ENCODE measurements at regions of chr17 and their contacts with region 1.

Region 1: GRCh38 chr17:61412143-61412859 is 12.7 kb downstream of the TBX2 start:
- DNase-seq: peak; percentile 77 to 93 (median 86)
- ATAC-seq: peak; percentile 14 to 80 (median 76)
- H3K4me3 ChIP-seq: peak overlapping the region; percentile 37 to 84 (median 65)
- H3K27ac ChIP-seq: peak overlapping the region; percentile 67 to 92 (median 83)
- H3K4me1 ChIP-seq: peaks cover 0 to 79% (median 40%) of the 10 kb centered on the region in 12 donors
- H3K27me3 ChIP-seq: peaks cover 0 to 57% (median 10%) of the 10 kb centered on the region in 9 donors
- CTCF ChIP-seq: peak; percentile 98 to 100 (median 99)
- POLR2A ChIP-seq: peak in 1 of 2 donors; percentile 41

Region 2: DNA sequence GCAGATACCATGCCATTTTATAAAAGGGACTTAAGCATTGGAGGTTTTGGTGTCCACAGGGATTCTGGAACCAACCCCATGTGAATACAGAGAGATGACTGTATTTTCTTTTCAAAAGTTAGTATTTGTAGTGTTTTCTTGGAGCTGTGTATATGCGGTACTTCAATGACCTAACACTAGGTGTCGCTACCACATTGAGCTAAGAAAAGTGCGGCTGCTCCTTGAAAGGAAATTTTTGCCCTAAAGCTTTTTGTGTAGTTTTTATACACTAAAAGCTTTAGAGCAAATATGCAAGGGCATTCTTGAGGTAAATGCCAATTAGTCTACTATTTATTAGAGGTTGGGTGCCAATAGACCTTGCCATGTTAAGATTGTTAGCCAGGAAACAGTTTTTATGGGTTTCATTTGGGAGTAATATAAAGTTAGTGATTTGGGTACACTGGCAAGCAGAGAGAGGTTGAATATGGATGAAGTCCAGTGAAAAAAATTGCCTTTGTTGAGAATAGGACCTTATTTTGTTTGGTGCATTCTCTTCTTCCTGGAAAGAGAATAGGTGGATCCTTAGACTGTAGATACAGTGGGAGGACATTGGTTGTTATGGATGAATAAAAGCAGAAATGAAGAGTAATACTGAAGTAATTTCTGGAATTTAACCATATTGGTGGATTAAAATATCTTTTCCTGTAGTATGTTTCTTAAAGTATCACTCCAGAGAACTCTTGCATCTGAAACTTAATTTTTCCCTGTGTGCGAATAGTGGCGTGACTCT is 691.4 kb before region 1 on chr17:
- intact Hi-C with region 1: loop called in 6 of 10 experiments (anchors 2 to 10 kb)
- DNase-seq: peak in 2 of 5 donors; percentile 18 to 27
- ATAC-seq: peak in 2 of 4 donors; percentile 41 to 62
- H3K4me3 ChIP-seq: no peak overlapping the region
- H3K27ac ChIP-seq: no peak overlapping the region
- H3K4me1 ChIP-seq: peaks cover 0 to 3% (median 0%) of the 10 kb centered on the region in 12 donors
- H3K27me3 ChIP-seq: no peaks in the 10 kb centered on the region
- CTCF ChIP-seq: peak; percentile 82 to 93 (median 88)
- POLR2A ChIP-seq: no peak

Region 3: DNA sequence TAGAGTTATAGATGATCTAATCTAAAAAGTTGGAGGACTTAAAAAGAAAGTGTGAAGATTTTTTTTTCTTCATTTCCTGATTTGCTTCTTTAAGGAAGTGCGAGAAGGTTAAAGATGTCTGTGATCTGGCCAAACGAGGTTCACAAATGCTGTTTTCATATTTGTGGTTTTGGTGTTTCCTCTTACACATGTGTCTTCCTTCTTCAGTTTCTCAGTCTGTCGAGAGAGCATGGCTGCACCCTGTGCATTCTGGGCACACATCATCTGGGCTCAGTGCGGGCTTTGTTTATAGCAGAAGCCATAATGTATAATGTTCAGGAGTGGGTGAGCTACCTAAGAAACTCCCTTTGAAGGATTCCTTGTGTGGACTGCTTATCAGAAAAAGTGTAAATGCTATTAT is 273.1 kb before region 1 on chr17:
- intact Hi-C with region 1: loop called in 1 of 10 experiments (anchors 10 kb)
- DNase-seq: no peak
- ATAC-seq: peak in 3 of 4 donors; percentile 46 to 73 (median 72)
- H3K4me3 ChIP-seq: no peak overlapping the region
- H3K27ac ChIP-seq: peak overlapping the region in 1 of 12 donors; percentile 47
- H3K4me1 ChIP-seq: peaks cover 0 to 29% (median 4%) of the 10 kb centered on the region in 12 donors
- H3K27me3 ChIP-seq: no peaks in the 10 kb centered on the region
- CTCF ChIP-seq: no peak
- POLR2A ChIP-seq: no peak

Region 4: DNA sequence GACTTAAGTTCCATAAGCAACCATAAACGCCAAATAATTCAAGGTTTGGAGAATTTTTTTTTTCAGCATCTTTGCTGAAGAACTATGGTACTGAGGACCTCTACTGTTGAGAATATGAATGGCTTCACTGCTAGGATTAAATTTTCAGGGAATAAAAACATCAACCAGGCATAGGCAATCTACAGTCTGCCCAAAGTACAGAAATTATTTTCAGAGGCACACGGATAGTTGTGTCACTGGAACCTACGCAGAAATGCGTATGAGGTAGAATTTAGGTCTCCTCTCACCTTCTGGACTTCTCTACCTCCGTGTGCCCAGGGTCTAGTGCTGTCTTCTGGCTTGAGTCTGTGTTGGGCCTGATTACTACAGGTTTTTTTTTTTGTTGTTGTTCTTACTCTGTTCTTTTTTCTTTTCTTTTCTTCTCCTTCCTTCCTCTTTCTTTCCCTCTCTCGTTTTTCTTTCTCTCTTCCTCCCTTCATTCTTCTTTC is 139.0 kb after region 1 on chr17:
- intact Hi-C with region 1: loop called (anchors 1 to 5 kb)
- DNase-seq: no peak
- ATAC-seq: no peak
- H3K4me3 ChIP-seq: no peak overlapping the region
- H3K27ac ChIP-seq: no peak overlapping the region
- H3K4me1 ChIP-seq: no peaks in the 10 kb centered on the region
- H3K27me3 ChIP-seq: peaks cover 0 to 30% (median 15%) of the 10 kb centered on the region in 9 donors
- CTCF ChIP-seq: peak; percentile 34 to 73 (median 54)
- POLR2A ChIP-seq: no peak

Region 5: DNA sequence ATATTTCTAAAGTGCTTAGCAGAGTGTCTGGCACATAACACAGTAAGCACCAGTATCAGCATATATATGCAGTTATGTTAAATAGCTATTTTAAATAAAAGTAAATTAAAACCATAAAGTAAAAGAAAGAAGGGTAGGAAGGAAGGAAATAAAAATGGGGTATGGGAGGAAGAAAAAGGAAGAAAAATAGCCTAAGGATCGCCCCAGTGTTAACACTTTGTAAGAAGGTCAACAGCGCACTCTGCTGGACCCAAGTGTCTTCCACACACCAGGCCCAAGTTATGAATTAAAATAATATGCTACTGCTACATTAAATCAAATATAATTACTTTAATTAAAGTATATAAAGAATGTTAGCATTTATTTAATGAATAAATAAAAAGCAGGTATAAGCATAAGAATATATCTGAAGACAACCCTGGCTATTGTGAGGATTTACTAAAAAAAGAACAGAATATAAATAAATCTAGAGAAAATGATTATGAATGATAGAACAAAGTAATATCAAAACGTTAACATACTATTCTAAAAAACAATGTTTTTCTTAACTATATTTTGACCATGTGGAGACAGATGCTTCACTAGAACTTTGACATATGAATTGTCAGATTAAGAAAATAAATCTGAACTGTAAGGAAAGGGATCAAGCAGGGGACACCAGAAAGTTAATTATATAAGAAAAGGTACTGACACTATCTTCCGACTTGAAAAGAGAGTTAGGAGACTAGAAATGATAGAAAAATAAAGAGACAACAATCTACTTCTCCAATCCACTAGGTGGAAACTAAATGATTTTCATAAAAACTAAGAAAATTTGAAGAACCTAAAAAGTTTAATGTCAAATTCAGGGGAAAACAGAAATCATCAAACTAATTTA is 425.1 kb after region 1 on chr17:
- intact Hi-C with region 1: loop called in 8 of 10 experiments (anchors 5 to 10 kb)
- DNase-seq: peak in 4 of 5 donors; percentile 15 to 43 (median 36)
- ATAC-seq: peak in 3 of 4 donors; percentile 44 to 57 (median 50)
- H3K4me3 ChIP-seq: no peak overlapping the region
- H3K27ac ChIP-seq: no peak overlapping the region
- H3K4me1 ChIP-seq: no peaks in the 10 kb centered on the region
- H3K27me3 ChIP-seq: no peaks in the 10 kb centered on the region
- CTCF ChIP-seq: peak; percentile 37 to 77 (median 58)
- POLR2A ChIP-seq: no peak

Region 6: DNA sequence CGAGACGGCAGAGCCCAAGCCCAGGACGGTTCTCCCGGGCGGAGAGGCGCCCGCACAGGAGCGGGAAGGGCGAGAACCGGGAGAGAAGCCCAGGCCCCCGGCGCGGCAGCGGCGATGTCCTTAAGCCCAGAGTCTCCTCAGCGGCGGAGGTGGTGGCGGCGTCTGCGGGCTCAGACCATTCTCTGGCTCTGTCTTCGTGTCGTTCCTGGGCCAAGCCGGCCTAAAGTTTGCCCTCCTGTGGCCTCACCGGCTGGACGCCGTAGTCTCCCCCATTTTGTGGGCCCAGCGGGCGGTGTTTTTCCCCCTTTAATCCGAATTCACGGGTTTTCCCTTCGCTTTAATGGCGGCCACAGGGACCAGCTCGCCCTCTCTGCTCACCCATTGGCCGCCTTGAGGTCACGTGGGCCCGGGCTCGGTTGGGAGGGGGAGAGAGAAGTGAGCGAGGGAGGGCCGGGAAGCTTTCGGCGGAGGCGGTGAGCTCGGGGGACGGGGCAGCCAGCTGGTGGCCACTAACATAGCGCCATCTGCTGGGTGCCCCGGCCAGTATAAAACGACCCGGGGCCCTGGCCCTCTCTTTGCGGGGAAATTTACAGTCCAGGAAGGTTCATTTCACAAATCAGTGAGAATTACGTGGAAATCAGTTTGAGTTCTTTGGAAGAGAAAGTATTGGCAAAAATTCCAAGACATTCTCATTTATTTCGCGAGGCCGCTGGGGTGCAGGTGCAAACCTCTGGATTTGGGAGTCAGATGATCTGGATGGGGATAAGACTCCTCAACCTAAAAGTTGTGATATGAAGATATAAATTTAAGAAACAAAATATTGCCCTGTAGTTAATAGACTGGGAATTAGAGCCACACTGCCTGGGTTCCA is 653.5 kb after region 1 on chr17:
- intact Hi-C with region 1: loop called in 6 of 10 experiments (anchors 2 to 10 kb)
- DNase-seq: peak; percentile 99 to 100 (median 99)
- ATAC-seq: peak; percentile 99 to 100 (median 100)
- H3K4me3 ChIP-seq: peak overlapping the region; percentile 79 to 98 (median 95)
- H3K27ac ChIP-seq: peak overlapping the region; percentile 93 to 100 (median 99)
- H3K4me1 ChIP-seq: peaks cover 9 to 36% (median 24%) of the 10 kb centered on the region in 12 donors
- H3K27me3 ChIP-seq: no peaks in the 10 kb centered on the region
- CTCF ChIP-seq: peak; percentile 87 to 98 (median 92)
- POLR2A ChIP-seq: peak; percentile 27 to 80